GM23248 (cell line): ENCODE measurements at regions of chr14 and their contacts with region 1.

Region 1: DNA sequence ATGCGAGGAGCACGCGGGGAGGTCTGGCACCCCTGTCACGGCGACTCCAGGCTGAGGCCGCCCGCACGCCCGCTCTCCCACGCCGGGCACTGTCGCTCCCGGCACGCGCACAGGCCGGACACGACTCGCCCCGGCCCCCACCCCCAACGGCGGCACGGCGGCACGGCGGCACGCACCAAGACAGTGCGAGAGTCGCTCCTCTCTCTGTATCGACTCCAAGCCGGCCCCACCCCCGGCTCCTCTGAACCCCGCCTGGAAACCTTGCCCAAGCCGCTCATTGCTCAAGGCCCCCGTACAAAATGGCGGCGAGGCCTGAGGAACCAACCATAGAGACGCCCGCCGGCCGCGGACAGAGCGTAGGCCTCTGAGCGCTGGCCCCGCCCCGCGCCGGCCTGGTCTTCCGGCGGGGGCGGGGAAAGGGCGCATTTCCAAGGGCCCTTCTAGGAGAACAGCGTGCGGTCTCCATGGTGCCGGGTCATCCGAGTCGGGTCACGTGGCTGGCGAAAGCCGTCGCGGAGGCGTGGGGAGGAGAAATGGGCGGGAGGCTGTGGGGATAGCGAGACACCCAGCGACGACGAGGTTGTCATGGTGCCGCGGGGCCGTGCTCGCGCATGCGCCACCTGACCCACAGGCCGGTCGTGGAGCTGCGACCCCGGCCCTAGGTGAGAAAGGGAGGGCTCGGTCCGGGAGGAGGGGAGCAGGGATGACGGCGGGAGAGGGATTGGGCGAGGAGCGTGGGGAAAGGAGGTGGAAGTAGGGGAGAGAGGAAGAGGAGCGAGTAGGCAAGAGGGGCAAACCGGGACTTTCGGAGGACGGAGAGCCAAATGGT is at the start of gene CIPC:
- DNase-seq: peak; percentile 99
- H3K4me3 ChIP-seq: peak within 1 kb of the TSS; percentile 88
- H3K27ac ChIP-seq: peak within 1 kb of the TSS; percentile 85
- H3K4me1 ChIP-seq: peaks cover 18% of the 10 kb centered on the region
- H3K27me3 ChIP-seq: no peaks in the 10 kb centered on the region
- total RNA-seq, gene CIPC: 10.8 and 14.4 TPM in 2 replicates

Region 2: DNA sequence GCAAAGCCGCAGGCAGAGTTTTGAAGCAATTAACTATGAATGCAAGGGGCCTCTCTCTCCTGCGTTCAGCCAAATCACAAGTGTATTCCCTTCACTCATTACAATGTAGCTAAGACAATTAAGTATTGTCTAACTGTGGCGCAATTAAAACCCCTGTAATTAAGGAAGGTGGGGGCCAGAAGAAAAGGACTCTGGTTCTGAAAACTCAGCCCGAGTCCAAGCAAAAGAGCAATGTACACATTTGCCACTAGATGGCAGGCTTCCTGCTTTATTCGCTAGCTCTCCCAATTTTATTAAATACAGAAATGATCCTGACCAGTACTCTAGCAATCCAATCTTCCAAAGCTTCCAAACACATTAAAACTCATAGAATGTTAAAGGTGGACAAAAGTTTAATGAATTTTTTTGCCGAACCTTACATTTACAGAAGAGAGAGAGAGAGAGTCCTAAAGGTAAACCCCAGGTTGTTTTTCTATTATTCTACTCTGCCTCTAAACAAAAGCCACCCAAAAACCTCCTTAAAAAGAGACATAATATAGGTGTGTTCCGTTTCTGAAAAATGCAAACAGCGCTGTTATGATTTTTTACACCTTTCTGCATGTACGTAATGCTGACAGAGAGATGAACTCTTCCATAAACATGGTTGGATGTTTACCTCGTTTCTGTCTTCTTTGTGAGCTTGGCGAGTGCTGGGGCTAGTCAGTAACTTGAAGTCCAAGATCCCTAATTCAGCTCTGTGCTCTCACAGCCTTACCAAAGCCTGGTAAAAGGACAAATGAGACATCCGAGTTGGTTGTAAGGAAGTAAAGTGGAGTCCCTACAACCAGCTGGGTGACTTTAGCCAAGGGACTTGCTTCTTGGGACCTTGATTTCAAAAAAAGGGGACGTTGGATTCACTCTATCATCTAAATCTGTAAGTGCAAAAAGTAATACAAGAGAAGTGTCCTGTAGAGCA is 387.6 kb before region 1 on chr14:
- in situ Hi-C with region 1: loop called (anchors 25 kb)
- DNase-seq: peak; percentile 65
- H3K4me3 ChIP-seq: no peak overlapping the region
- H3K27ac ChIP-seq: no peak overlapping the region
- H3K4me1 ChIP-seq: no peaks in the 10 kb centered on the region
- H3K27me3 ChIP-seq: 0 out of 2 replicates have a peak, but pooled peaks cover 5% of the 10 kb centered on the region

Region 3: GRCh38 chr14:76872796-76873432 is 225.0 kb before region 1 on chr14:
- in situ Hi-C with region 1: no loop called
- DNase-seq: peak; percentile 63
- H3K4me3 ChIP-seq: no peak overlapping the region
- H3K27ac ChIP-seq: no peak overlapping the region
- H3K4me1 ChIP-seq: no peaks in the 10 kb centered on the region
- H3K27me3 ChIP-seq: peaks cover 5% of the 10 kb centered on the region

Region 4: GRCh38 chr14:77007975-77008421 is 89.9 kb before region 1 on chr14:
- in situ Hi-C with region 1: no loop called
- DNase-seq: no peak
- H3K4me3 ChIP-seq: no peak overlapping the region
- H3K27ac ChIP-seq: no peak overlapping the region
- H3K4me1 ChIP-seq: peaks cover 5% of the 10 kb centered on the region; the same call in 1 of the 2 replicates
- H3K27me3 ChIP-seq: no peaks in the 10 kb centered on the region